ENCODE measurements at regions of chr9 and their contacts with region 1.

Region 1: DNA sequence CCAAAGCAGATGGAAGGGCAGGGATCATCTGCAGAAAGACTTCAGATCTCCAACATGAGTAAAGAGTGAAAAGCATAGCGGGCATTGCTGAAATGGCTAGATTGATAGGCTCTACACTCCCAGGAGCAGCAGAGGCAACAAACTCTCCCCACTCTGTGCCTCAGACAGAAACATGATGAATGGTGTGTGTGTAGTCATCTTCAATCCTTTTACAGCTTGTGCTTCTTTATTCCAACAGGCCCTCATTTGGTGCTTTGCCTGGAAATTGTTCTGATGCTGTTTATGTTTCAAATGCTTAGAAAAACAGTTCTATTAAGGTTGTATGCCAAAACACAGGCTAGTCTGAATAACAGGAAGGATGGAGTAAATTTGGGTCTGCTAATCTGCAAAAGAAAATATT is 176.2 kb downstream of the DMRTA1 start:
- DNase-seq: no peak
- H3K4me3 ChIP-seq: no peak overlapping the region
- H3K27ac ChIP-seq: no peak overlapping the region
- H3K4me1 ChIP-seq: no peaks in the 10 kb centered on the region
- H3K27me3 ChIP-seq: no peaks in the 10 kb centered on the region
- CTCF ChIP-seq: no peak
- POLR2A ChIP-seq: no peak

Region 2: GRCh38 chr9:21902136-21902535 is 720.7 kb before region 1 on chr9:
- intact Hi-C with region 1: no loop called
- DNase-seq: no peak
- H3K4me3 ChIP-seq: no peak overlapping the region
- H3K27ac ChIP-seq: no peak overlapping the region
- H3K4me1 ChIP-seq: no peaks in the 10 kb centered on the region
- H3K27me3 ChIP-seq: no peaks in the 10 kb centered on the region
- CTCF ChIP-seq: no peak
- POLR2A ChIP-seq: no peak

Region 3: GRCh38 chr9:22595805-22596204 is 27.0 kb before region 1 on chr9:
- intact Hi-C with region 1: loop called (anchors 2 kb)
- DNase-seq: no peak
- H3K4me3 ChIP-seq: no peak overlapping the region
- H3K27ac ChIP-seq: no peak overlapping the region
- H3K4me1 ChIP-seq: no peaks in the 10 kb centered on the region
- H3K27me3 ChIP-seq: no peaks in the 10 kb centered on the region
- CTCF ChIP-seq: no peak
- POLR2A ChIP-seq: no peak